ENCODE measurements at regions of chr18 and their contacts with region 1.

Region 1: DNA sequence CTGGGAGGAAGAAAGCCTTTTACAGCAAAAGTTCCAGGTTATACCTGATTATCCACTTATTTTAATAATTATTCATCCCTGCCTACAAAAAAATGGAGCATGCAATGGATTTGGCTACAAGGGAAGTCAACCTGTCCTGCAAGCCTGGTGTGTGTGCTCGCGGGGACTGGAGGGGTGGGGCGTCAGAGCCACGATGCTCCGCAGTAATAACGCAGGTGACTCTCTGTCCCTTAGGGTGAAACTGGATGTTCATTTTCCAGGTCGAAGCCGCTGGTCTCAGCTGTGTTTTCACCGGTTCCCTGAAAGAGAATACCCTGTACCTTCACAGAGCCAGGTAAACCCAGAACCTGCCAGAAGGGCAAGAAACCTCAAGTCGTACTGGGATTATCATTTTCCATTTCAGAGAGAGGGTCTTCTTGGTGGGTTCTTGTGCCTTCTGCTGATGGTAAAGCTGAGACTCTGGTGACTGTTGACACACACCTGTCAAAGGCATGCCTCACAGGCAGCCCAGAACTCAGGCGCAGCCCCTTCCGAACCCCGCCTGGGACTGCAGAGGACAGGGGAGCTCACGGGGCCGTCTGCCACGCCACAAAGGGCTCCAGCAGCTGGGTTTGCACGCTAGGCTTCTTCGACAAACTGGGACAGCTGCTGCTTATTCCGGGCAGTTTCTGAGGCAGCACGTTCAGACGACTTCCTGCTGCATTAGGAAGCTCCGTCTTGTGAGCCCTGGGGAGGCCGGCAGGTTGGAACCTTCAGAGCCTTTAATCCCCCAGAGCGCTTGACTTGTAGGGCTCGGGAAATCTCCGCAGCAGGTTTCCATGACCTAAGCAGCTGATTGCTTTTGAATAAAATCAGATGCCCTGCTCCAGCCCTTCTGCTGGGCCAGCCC is 58.6 kb downstream of the KCNG2 start:
- DNase-seq: no peak
- H3K4me3 ChIP-seq: peak overlapping the region in 1 of 3 experiments; percentile 12
- H3K27ac ChIP-seq: no peak overlapping the region
- H3K4me1 ChIP-seq: no peaks in the 10 kb centered on the region
- H3K27me3 ChIP-seq: no peaks in the 10 kb centered on the region
- CTCF ChIP-seq: no peak

Region 2: GRCh38 chr18:79805211-79805887 is 51.0 kb before region 1 on chr18:
- CTCF ChIA-PET with region 1: no interaction called
- dilution Hi-C with region 1: loop called (anchors 5 kb)
- in situ Hi-C with region 1: no loop called
- intact Hi-C with region 1: no loop called
- DNase-seq: no peak
- H3K4me3 ChIP-seq: no peak overlapping the region
- H3K27ac ChIP-seq: no peak overlapping the region
- H3K4me1 ChIP-seq: no peaks in the 10 kb centered on the region
- H3K27me3 ChIP-seq: no peaks in the 10 kb centered on the region
- CTCF ChIP-seq: no peak